ENCODE measurements at regions of chr10 and their contacts with region 1.

Region 1: GRCh38 chr10:104274762-104275721 is 6.1 kb downstream of the GSTO2 start:
- DNase-seq: peak; percentile 59
- ATAC-seq: peak; percentile 93
- H3K4me3 Mint-ChIP-seq: peak overlapping the region; percentile 62
- H3K27ac Mint-ChIP-seq: no peak overlapping the region
- H3K4me1 Mint-ChIP-seq: peaks cover 8% of the 10 kb centered on the region
- H3K27me3 Mint-ChIP-seq: peaks cover 19% of the 10 kb centered on the region
- CTCF ChIP-seq: peak; percentile 90

Region 2: GRCh38 chr10:104254493-104255310 is 20.3 kb before region 1 on chr10 and contains the start of gene GSTO1:
- CTCF ChIA-PET with region 1: interaction called, 36 read pairs
- POLR2A ChIA-PET with region 1: interaction called, 74 read pairs
- intact Hi-C with region 1: no loop called
- DNase-seq: peak; percentile 64
- ATAC-seq: peak; percentile 61
- H3K4me3 Mint-ChIP-seq: peak within 1 kb of the TSS; percentile 86
- H3K27ac Mint-ChIP-seq: peak within 1 kb of the TSS; percentile 96
- H3K4me1 Mint-ChIP-seq: peaks cover 48% of the 10 kb centered on the region
- H3K27me3 Mint-ChIP-seq: peaks cover 4% of the 10 kb centered on the region
- CTCF ChIP-seq: no peak
- total RNA-seq, gene GSTO1: 179 to 189 TPM

Region 3: GRCh38 chr10:104291439-104291951 is 16.5 kb after region 1 on chr10:
- CTCF ChIA-PET with region 1: interaction called, 239 read pairs
- POLR2A ChIA-PET with region 1: interaction called, 4 read pairs
- intact Hi-C with region 1: no loop called
- DNase-seq: peak; percentile 94
- ATAC-seq: peak; percentile 100
- H3K4me3 Mint-ChIP-seq: no peak overlapping the region
- H3K27ac Mint-ChIP-seq: no peak overlapping the region
- H3K4me1 Mint-ChIP-seq: peaks cover 9% of the 10 kb centered on the region
- H3K27me3 Mint-ChIP-seq: peaks cover 12% of the 10 kb centered on the region
- CTCF ChIP-seq: peak; percentile 99

Region 4: DNA sequence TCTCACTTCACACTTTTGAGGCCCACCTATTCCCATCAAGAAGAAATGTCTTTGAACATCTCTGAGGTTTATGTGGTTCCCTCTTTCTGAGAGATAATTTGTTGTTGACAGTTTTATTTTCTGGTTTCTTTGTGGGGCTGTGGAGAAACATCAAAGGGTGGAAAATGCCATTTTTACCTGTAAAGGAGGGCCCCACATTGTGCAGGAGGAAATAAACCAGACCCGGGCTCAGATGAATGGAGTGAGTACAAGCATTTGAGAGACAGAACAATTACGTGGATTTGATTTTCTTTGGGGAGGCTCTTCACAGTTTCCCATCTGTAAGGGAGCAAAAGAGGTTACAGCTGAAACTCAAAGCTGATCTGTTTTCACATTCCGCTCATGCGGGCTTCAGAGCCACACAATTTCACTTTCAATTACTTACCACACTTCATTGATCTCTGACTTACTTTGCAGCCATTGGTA is 33.4 kb after region 1 on chr10:
- CTCF ChIA-PET with region 1: interaction called, 62 read pairs
- POLR2A ChIA-PET with region 1: interaction called, 3 read pairs
- intact Hi-C with region 1: no loop called
- DNase-seq: peak; percentile 59
- ATAC-seq: peak; percentile 73
- H3K4me3 Mint-ChIP-seq: peak overlapping the region; percentile 1
- H3K27ac Mint-ChIP-seq: peak overlapping the region; percentile 74
- H3K4me1 Mint-ChIP-seq: peaks cover 60% of the 10 kb centered on the region
- H3K27me3 Mint-ChIP-seq: peaks cover 5% of the 10 kb centered on the region
- CTCF ChIP-seq: no peak

Region 5: GRCh38 chr10:104337974-104338735 is 63.1 kb after region 1 on chr10 and contains the start of gene ITPRIP:
- CTCF ChIA-PET with region 1: interaction called, 14 read pairs
- POLR2A ChIA-PET with region 1: interaction called, 10 read pairs
- intact Hi-C with region 1: no loop called
- DNase-seq: peak; percentile 84
- ATAC-seq: peak; percentile 76
- H3K4me3 Mint-ChIP-seq: peak within 1 kb of the TSS; percentile 86
- H3K27ac Mint-ChIP-seq: peak within 1 kb of the TSS; percentile 100
- H3K4me1 Mint-ChIP-seq: peaks cover 45% of the 10 kb centered on the region
- H3K27me3 Mint-ChIP-seq: no peaks in the 10 kb centered on the region
- CTCF ChIP-seq: no peak
- total RNA-seq, gene ITPRIP: 18.3 to 18.9 TPM

Measured in activated CD8-positive, alpha-beta T cell treated with anti-CD3 and anti-CD28 coated beads for 36 hours (primary cell).